Head of caudate nucleus (tissue), 42 donors: ENCODE measurements at regions of chr4 and their contacts with region 1.

Region 1: DNA sequence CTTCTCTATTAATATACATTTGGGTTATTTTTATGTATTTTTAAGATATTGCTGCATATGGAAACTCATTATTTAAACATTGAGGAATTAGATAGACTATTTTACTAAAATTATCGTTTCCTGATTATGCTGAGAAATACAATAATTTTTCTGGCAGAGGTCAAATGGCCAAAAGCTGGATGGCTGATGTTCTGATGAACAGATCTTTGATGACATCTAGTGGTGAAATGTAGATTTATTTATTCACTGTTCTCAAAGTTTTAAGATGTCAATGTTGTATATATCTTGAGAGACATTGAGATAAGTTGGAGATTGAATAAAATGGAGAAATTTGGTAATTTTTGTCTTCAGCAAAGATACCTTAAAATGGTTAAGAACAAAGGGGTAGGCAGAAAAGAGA is 96.2 kb downstream of the UGT8 start:
- DNase-seq: peak in 1 of 42 donors; percentile 37

Region 2: DNA sequence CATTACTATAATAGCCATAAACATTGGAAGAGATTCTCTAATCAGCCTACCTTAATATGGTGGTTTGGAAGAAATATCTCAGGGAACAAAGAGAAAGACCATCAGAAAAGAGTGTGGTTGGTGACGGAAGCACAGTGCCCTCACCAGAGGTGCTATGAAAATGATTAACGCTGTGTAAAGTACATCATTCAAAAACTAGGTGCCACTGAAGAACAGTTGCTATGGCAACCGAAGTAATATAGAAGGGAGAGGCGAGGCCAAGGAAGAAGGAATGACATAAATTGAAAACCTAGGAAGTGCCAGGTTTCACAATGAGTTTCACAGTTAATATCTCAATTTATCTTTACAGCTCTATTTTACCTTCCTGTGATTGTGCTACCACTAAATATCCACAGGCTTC is 658.3 kb before region 1 on chr4:
- intact Hi-C with region 1: no loop called
- DNase-seq: peak in 16 of 42 donors; percentile 1 to 70 (median 18)

Region 3: DNA sequence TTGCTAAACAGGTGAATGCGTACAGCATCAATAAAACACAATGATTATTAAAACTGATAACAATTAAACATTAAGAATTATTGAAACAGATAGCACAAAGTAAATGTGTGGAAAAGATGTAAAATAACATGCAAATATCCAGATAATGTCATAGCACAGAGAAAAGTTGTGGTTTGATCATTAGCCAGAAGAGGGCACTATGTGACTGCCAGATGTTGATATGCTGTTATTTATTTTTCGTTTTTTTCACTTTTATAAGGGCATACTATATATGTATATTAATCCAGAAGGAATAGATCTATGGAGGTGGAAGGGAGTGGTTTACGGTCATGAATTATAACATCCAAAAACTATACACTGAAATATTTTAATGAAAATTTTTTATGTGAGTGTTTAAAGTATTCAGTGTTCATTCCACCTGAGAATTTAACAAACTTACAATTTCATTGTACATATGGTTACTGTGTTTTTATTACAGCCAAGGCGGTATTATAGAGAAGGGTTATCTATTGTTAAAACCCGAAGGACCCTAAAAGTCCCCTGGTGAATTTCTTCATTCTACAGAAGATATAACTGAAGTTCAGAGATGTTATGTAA is 308.0 kb before region 1 on chr4:
- intact Hi-C with region 1: loop called (anchors 5 kb)
- DNase-seq: peak in 10 of 42 donors; percentile 7 to 71 (median 34)